Tibial artery (tissue), 4 donors: ENCODE measurements at regions of chr12 and their contacts with region 1.

Region 1: GRCh38 chr12:10153271-10154144 is 18.4 kb downstream of the OLR1 start:
- DNase-seq: peak; percentile 42 to 81
- H3K4me3 ChIP-seq: peak overlapping the region; percentile 54 to 59
- H3K27ac ChIP-seq: peak overlapping the region; percentile 61 to 71
- H3K4me1 ChIP-seq: peaks cover 0 to 14% (median 6%) of the 10 kb centered on the region in 4 donors
- H3K27me3 ChIP-seq: no peaks in the 10 kb centered on the region
- CTCF ChIP-seq: peak; percentile 70 to 85

Region 2: GRCh38 chr12:10186299-10186698 is 32.8 kb after region 1 on chr12:
- intact Hi-C with region 1: loop called (anchors 5 kb)
- DNase-seq: peak; percentile 48 to 76
- H3K4me3 ChIP-seq: no peak overlapping the region
- H3K27ac ChIP-seq: no peak overlapping the region
- H3K4me1 ChIP-seq: no peaks in the 10 kb centered on the region
- H3K27me3 ChIP-seq: peaks cover 0 to 17% of the 10 kb centered on the region in 2 donors
- CTCF ChIP-seq: no peak